ENCODE measurements at regions of chr3 and their contacts with region 1.

Region 1: DNA sequence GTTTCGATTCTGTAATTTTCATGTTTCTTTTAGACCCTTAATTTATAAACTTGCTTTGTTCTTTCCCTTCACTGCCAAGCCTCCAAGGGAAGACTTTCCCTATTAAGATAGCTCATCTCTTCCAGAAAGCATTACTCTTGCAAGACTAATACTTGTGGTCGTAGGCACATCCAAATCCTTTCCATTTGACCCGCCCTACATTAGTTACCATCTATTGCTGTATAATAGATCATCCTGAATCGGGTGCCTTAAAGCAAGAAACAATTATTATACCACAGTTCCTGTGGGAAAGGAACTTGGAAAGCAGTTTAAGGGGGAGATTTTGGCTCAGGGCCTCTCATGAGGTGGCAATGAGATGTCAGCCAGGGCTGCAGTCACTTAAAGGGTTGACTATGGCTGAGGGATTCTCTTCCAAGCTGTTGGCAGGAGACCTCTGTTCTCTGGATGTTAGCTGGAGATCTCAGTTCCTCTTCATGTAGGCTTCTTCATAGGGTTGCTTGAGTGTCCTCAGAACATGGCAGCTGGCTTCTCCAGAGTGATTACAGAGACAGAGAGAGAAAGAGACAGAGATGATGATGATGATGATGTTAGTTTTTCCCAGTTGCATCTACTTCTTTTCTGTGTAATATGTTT is 570.4 kb upstream of the TGFBR2 start:
- DNase-seq: no peak
- H3K4me3 ChIP-seq: no peak overlapping the region
- H3K4me1 ChIP-seq: no peaks in the 10 kb centered on the region
- H3K27me3 ChIP-seq: no peaks in the 10 kb centered on the region

Region 2: DNA sequence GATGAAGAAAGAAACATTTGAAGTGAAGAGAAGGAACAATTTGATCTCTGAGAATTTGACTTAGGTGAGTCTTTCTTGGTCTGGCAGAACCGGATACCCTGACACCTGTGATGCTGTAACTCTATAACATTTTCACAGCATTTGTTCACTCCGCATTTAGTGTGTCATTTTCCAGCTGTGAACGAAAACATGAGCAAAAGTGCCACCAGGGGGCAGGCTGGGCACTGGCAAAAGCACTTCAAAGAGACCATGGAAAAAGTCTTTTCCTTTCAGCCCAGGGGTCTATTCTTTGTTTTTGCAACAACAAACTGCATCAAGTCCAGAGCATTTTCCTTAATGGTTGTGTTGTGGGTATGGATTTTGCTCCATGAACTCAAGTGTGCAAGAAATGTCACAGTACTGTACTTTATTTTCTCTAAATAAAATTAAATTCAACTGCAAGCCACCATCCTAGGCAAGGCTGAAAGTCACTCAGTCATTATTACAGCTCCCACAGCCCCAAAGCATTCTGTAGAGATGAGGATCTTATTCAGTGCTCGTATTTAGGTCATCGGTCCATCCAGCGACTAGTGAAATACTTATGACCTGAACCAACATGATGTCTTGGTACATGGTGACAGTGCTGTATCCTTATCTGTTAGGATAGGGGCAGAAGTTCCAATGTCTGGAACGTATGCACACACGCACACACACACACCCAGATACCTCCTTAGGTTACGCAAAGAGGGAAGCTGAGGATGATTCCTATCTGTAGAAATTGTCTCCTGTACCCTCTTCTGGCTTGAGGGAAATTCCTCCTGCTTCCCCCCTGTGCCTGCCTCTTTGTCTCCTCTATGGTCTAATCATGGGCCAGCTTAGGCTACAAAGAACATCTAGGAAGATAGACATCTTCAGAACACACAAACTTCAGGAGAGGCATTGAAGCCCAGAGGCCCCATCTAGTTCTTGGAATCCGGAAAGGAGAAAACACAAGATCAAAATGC is 732.9 kb after region 1 on chr3:
- in situ Hi-C with region 1: loop called (anchors 10 kb)
- DNase-seq: peak; percentile 58 to 86
- H3K4me3 ChIP-seq: no peak overlapping the region
- H3K4me1 ChIP-seq: peaks cover 4% of the 10 kb centered on the region; the same call in 1 of the 2 replicates
- H3K27me3 ChIP-seq: no peaks in the 10 kb centered on the region

Measured in HAP-1 (cell line).